GM10248 (cell line): ENCODE measurements at regions of chr10 and their contacts with region 1.

Region 1: GRCh38 chr10:73879296-73880173 is 5.2 kb upstream of the CAMK2G start:
- DNase-seq: peak; percentile 85
- CTCF ChIP-seq: peak; percentile 87

Region 2: GRCh38 chr10:73623056-73623455 is 256.5 kb before region 1 on chr10:
- CTCF ChIA-PET with region 1: no interaction called
- POLR2A ChIA-PET with region 1: no interaction called
- DNase-seq: no peak
- CTCF ChIP-seq: no peak

Region 3: GRCh38 chr10:73772280-73773151 is 107.0 kb before region 1 on chr10:
- CTCF ChIA-PET with region 1: interaction called, 13 read pairs
- POLR2A ChIA-PET with region 1: no interaction called
- DNase-seq: peak; percentile 82
- CTCF ChIP-seq: no peak

Region 4: DNA sequence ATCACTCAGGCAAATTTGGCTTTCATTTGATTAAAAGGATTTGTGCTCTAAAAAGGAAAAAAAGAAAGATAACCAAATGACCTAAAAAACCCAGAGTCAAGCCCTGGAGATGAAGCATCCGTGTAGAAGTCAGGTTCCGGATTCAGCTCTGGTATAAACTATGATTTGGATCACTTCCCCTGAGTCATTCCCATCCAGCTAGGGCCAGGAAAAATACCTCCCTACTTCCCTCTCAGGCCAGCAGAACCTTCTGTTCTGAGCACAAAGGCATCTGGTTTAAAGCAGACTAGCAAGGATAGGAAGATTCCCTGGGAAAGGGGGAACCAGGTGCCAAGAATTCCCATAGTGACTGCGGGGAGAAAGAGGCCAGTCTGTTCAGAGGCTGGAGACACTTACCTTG is 42.5 kb before region 1 on chr10:
- CTCF ChIA-PET with region 1: interaction called, 47 read pairs
- POLR2A ChIA-PET with region 1: no interaction called
- DNase-seq: no peak
- CTCF ChIP-seq: no peak

Region 5: DNA sequence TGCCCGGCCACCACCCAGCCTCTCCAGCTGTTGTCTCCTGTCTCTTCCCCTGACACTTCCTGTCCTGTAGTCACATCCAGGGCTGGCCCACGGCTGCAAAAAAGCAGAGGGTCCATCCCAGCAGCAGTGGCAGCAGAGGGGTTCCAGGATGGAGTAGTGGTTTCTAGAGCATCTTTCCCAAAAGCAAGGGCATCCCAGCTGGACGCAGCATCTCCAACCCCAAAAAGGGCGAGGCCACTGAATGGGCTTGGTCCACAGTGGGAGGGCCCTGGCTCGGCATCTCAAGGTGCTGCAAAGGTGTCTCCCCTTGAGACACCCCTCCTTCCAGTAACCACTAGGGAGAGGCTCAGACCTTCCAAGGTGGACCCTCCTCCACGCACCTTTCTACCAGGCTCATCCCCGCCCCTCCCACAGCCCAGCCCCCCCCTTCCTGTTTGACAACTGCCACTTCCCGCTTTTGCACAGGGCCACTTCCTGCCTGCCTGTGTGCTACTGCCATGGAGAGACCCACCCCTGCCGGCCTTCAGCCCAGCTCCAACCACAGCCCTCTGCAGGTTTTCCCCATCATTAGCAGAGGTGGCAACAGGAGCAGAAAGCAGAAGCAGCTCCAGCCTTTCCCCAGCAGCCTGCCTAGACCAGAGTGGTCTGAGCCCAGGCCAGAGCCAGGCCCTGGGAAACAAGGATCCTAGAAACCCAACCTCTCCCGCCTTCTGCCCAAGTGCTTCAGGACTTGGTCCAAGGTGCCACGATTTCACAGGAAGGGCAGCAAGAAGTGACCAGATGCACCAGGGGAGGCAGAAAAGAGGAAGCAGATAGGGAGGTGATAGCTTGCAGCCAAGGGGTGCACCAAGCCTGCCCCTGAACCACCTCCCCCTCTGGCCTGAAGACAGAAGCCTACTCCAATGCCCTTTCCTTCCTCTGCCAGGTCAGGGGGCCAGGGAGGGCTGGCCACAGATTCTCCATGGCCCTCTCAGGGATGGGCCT is 13.8 kb before region 1 on chr10:
- CTCF ChIA-PET with region 1: interaction called, 72 read pairs
- POLR2A ChIA-PET with region 1: no interaction called
- DNase-seq: peak; percentile 75
- CTCF ChIP-seq: no peak

Region 6: DNA sequence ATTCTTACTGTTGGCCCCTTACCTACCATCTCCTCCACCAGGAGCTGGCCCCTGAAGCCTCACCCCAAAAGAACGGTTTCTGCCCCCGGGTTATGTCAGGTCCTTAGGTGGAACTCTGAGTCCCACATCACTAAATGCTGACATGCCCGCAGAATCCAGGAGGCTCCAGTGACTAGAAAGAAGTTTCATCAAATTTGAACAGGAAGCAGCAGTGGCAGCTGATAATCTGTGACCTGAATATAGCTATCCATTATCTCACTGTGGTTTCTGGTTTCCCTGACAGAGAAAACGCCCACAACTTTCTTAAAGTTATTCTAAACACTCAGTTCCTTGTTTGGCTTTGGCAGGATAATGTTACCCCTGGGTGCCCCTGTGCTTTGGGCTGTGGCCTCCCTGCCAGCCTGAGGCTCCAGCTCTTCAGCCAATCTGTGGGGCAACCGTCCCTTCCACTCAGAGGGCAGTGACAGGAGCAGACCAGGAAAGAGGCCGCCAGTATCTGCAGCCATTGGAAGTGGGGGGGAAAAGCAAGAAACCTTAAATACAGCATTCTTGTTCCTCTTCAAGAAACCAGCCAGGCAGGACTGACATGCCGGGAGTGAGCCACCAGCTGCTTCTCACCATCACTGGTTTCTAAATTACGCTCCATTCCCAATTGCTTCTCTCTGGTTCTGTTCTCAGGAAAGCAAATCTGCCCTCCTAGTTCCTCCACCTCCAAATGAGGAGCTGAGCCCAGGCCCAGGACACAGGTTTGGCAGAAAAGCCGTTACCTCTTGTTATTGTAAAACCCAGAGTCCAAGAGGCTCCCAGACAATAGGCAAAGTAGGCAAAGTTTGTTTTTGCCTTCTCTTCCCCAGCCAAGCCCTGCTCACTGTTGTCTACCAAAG is 77.2 kb after region 1 on chr10:
- CTCF ChIA-PET with region 1: interaction called, 13 read pairs
- POLR2A ChIA-PET with region 1: interaction called, 3 read pairs
- DNase-seq: peak; percentile 69
- CTCF ChIP-seq: no peak